B cell (primary cell): ENCODE measurements at regions of chr20 and their contacts with region 1.

Region 1: GRCh38 chr20:653110-653589 is at the start of gene SRXN1:
- DNase-seq: peak; percentile 83
- ATAC-seq: peak; percentile 94
- H3K4me3 ChIP-seq: peak within 1 kb of the TSS; percentile 41 to 67 (median 53)
- H3K4me3 Mint-ChIP-seq: peak within 1 kb of the TSS; percentile 79
- H3K27ac ChIP-seq: no peak within 1 kb of the TSS
- H3K27ac Mint-ChIP-seq: peak within 1 kb of the TSS; percentile 69
- H3K4me1 ChIP-seq: peaks cover 10 to 18% of the 10 kb centered on the region in 2 donors
- H3K4me1 Mint-ChIP-seq: peaks cover 20% of the 10 kb centered on the region
- H3K27me3 ChIP-seq: peaks cover 0 to 8% (median 0%) of the 10 kb centered on the region in 4 experiments
- H3K27me3 Mint-ChIP-seq: peaks cover 10% of the 10 kb centered on the region
- CTCF ChIP-seq: peak; percentile 70
- total RNA-seq, gene SRXN1: 3.7 and 4.5 TPM in 2 replicates

Region 2: DNA sequence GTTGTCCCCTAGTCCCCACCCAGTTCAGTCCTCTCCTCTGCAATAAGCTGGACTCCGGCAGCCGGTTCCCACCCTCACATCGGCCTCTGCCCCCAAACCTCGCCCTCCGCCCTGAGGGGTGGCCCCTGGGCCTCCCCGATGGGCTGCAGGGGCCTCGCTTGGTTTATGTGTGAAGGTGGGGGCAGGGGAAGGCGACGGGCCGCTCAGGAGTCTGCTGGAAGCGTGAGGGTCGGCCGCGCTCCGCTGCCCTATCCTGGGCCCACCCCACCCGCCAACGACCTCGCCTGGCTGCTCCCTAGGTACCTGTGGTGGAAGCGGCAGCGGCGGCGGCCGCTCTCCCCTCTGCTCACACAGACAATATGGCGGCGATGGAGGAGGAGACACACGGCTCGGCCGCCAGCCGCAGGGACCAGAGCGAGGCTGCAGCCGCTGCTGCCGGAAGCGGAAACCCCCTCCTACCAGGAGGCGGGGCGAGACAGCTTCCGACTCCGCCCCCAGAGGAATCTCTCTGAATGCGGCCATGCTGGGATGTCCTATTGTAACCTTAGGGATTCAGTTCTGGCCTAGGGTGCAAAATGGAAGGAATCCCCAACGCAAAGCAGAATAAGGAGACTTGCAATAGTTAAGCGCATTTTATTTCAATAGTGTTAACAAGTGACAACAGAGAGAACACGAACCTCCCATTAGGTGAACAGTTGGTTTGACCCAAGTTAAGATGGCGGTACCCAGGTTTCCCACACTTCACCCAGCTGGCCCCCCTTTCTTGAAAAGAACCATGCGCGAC is 109.6 kb before region 1 on chr20 and contains the start of gene CSNK2A1:
- CTCF ChIA-PET with region 1: no interaction called
- POLR2A ChIA-PET with region 1: no interaction called
- intact Hi-C with region 1: loop called (anchors 1 kb)
- DNase-seq: peak; percentile 99
- ATAC-seq: peak; percentile 91
- H3K4me3 ChIP-seq: peak within 1 kb of the TSS; percentile 30 to 98 (median 85)
- H3K4me3 Mint-ChIP-seq: peak within 1 kb of the TSS; percentile 95
- H3K27ac ChIP-seq: peak within 1 kb of the TSS; percentile 93 to 99
- H3K27ac Mint-ChIP-seq: peak within 1 kb of the TSS; percentile 100
- H3K4me1 ChIP-seq: peaks cover 33 to 36% of the 10 kb centered on the region in 2 donors
- H3K4me1 Mint-ChIP-seq: peaks cover 53% of the 10 kb centered on the region
- H3K27me3 ChIP-seq: peaks cover 0 to 4% (median 2%) of the 10 kb centered on the region in 4 experiments
- H3K27me3 Mint-ChIP-seq: peaks cover 4% of the 10 kb centered on the region
- CTCF ChIP-seq: no peak
- total RNA-seq, gene CSNK2A1: 125 and 135 TPM in 2 replicates